Naive thymus-derived CD8-positive, alpha-beta T cell (primary cell): ENCODE measurements at regions of chr1 and their contacts with region 1.

Region 1: DNA sequence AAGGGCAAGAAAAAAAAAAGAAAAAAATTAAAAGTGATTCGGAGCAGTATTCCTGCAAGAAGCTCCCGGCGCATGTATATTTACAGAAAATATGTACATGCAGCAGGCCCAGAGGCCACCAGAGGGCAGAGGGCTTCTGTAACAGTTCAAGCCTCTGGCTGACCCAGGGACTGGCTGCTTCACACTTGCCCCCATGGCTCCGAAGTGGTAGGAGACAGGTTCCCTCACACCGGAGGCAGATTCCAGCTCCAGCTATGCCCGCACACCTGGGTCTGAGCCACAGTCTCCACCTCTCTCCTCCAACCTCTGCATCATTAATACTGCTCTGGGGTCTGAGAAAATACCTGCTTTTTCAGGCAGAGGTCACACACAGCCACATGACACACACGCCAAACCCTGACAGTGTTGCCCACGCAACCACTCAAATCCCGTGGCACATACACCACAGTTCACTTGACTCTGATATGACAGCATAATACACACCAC is 2.2 kb upstream of the ARHGAP30 start:
- DNase-seq: peak; percentile 29 to 76 (median 44)
- ATAC-seq: no peak
- H3K4me3 Mint-ChIP-seq: peak overlapping the region in 4 of 10 donors; percentile 18 to 47 (median 24)
- H3K27ac Mint-ChIP-seq: peak overlapping the region; percentile 68 to 98 (median 88)
- H3K4me1 Mint-ChIP-seq: peaks cover 29 to 57% (median 46%) of the 10 kb centered on the region in 4 donors
- H3K27me3 Mint-ChIP-seq: no peaks in the 10 kb centered on the region

Region 2: GRCh38 chr1:160891474-160891873 is 180.5 kb before region 1 on chr1:
- POLR2A ChIA-PET with region 1: no interaction called
- DNase-seq: no peak
- ATAC-seq: no peak
- H3K4me3 Mint-ChIP-seq: no peak overlapping the region
- H3K27ac Mint-ChIP-seq: no peak overlapping the region
- H3K4me1 Mint-ChIP-seq: peaks cover 0 to 3% (median 0%) of the 10 kb centered on the region in 4 donors
- H3K27me3 Mint-ChIP-seq: peaks cover 0 to 8% (median 3%) of the 10 kb centered on the region in 5 donors

Region 3: DNA sequence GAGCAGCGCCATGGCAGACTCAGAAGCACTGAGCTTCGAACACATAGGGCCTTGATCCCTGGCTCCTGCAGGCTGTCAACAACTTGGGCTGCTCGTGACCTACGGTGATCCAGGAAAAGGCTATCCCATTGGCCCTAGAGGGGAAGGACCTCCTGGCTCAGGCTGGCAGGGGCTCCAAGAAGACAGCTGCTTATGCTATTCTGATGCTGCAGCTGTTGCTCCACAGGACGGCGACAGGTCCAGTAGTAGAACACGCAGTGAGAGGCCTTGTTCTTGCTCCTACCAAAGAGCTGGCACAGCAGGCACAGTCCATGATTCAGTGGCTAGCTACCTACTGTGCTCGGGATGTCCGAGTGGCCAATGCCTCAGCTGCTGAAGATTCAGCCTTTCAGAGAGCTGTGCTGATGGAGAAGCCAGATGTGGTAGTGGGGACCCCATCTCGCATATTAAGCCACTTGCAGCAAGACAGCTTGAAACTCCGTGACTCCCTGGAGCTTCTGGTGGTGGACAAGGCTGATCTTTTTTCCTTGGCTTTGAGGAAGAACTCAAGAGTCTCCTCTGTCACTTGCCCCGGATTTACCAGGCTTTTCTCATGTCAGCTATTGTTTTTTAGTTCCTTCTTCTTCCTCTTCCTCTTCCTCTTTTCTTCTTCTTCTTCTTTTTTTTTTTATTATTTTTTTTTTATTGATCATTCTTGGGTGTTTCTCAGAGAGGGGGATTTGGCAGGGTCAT is 136.2 kb before region 1 on chr1:
- POLR2A ChIA-PET with region 1: no interaction called
- DNase-seq: no peak
- ATAC-seq: no peak
- H3K4me3 Mint-ChIP-seq: no peak overlapping the region
- H3K27ac Mint-ChIP-seq: no peak overlapping the region
- H3K4me1 Mint-ChIP-seq: no peaks in the 10 kb centered on the region
- H3K27me3 Mint-ChIP-seq: peaks cover 0 to 3% (median 0%) of the 10 kb centered on the region in 5 donors

Region 4: GRCh38 chr1:161021165-161021960 is 50.6 kb before region 1 on chr1:
- POLR2A ChIA-PET with region 1: interaction called, 17 read pairs
- DNase-seq: peak; percentile 78 to 95 (median 90)
- ATAC-seq: peak; percentile 94 to 97
- H3K4me3 Mint-ChIP-seq: peak overlapping the region; percentile 85 to 97 (median 90)
- H3K27ac Mint-ChIP-seq: peak overlapping the region; percentile 62 to 98 (median 94)
- H3K4me1 Mint-ChIP-seq: peaks cover 28 to 51% (median 45%) of the 10 kb centered on the region in 4 donors
- H3K27me3 Mint-ChIP-seq: peaks cover 0 to 2% (median 0%) of the 10 kb centered on the region in 5 donors

Region 5: GRCh38 chr1:161098210-161099068 is 26.5 kb after region 1 on chr1 and contains the start of gene KLHDC9:
- POLR2A ChIA-PET with region 1: interaction called, 119 read pairs
- DNase-seq: peak; percentile 33 to 79 (median 60)
- ATAC-seq: peak; percentile 71 to 78
- H3K4me3 Mint-ChIP-seq: peak within 1 kb of the TSS; percentile 83 to 96 (median 92)
- H3K27ac Mint-ChIP-seq: peak within 1 kb of the TSS; percentile 83 to 100 (median 88)
- H3K4me1 Mint-ChIP-seq: peaks cover 16 to 29% (median 25%) of the 10 kb centered on the region in 4 donors
- H3K27me3 Mint-ChIP-seq: peaks cover 0 to 4% (median 0%) of the 10 kb centered on the region in 5 donors
- polyA plus RNA-seq, gene KLHDC9: 0.30 to 1.5 (median 0.62) TPM

Region 6: GRCh38 chr1:161132410-161133219 is 60.7 kb after region 1 on chr1 and contains the start of gene DEDD:
- POLR2A ChIA-PET with region 1: interaction called, 20 read pairs
- DNase-seq: peak; percentile 74 to 95 (median 88)
- ATAC-seq: peak; percentile 95
- H3K4me3 Mint-ChIP-seq: no peak within 1 kb of the TSS
- H3K27ac Mint-ChIP-seq: peak within 1 kb of the TSS in 2 of 10 donors; percentile 92 to 96
- H3K4me1 Mint-ChIP-seq: peaks cover 33 to 62% (median 55%) of the 10 kb centered on the region in 4 donors
- H3K27me3 Mint-ChIP-seq: no peaks in the 10 kb centered on the region
- polyA plus RNA-seq, gene DEDD: 29.0 to 35.4 (median 29.3) TPM

Region 7: DNA sequence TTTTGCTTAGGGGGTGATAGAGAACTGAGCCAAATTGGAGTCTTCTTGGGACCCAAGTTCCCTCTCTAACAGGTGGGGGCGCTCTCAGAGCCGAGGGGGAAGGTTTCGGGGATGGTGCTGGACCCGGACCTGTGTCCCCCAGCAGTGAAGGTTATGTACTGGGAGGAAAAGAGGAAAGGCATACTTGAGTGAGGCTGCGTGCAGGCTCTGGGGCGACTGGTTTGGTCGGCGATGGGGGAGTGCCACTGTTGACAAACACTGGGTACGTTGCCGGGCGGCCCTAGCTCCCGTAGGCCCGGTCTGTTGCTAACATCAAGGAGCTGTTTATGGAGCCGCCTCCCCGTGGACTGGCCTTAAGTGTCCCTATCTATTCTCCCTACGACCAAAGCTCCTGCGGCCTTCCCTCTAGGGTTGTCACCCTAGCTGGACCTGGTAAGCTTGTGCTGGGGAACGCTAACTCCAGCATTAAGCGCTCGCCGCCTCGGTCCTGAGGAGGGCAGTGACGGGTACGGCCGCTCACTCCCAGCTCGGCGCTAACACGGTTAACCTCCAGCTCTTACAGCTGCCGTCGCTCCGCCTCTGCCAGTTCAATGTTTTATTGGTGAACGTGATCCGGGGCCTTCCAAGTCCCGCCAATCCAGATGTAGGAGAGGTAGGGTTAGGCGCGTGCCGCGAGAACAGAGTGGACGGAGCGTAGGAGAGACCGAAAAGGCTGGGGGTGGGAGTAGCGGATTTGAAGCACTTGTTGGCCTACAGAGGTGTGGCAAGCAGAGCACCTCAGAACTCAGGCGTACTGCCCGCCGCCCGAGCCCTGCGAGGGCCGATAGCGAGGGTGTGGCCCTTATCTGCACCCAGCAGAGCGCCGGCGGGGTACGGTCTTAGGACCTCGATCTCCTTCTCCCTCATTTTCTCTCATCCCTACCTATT is 94.1 kb after region 1 on chr1 and contains the start of gene PPOX:
- POLR2A ChIA-PET with region 1: interaction called, 14 read pairs
- DNase-seq: peak; percentile 76 to 97 (median 92)
- ATAC-seq: peak; percentile 90 to 92
- H3K4me3 Mint-ChIP-seq: peak within 1 kb of the TSS; percentile 86 to 97 (median 92)
- H3K27ac Mint-ChIP-seq: peak within 1 kb of the TSS; percentile 97 to 100 (median 98)
- H3K4me1 Mint-ChIP-seq: peaks cover 29 to 66% (median 63%) of the 10 kb centered on the region in 4 donors
- H3K27me3 Mint-ChIP-seq: no peaks in the 10 kb centered on the region
- polyA plus RNA-seq, gene PPOX: 12.0 to 17.8 (median 15.7) TPM

Region 8: GRCh38 chr1:161216945-161217712 is 145.2 kb after region 1 on chr1:
- POLR2A ChIA-PET with region 1: no interaction called
- DNase-seq: no peak
- ATAC-seq: peak; percentile 18 to 35
- H3K4me3 Mint-ChIP-seq: peak overlapping the region; percentile 57 to 89 (median 81)
- H3K27ac Mint-ChIP-seq: peak overlapping the region; percentile 90 to 97 (median 96)
- H3K4me1 Mint-ChIP-seq: peaks cover 45 to 72% (median 64%) of the 10 kb centered on the region in 4 donors
- H3K27me3 Mint-ChIP-seq: no peaks in the 10 kb centered on the region